Activated T-helper 2 cell treated with anti-CD3 and anti-CD28 coated beads, Interferon-gamma antibody, Interleukin-2, Interleukin-4, amounts not matched to agents 10 μg/mL and 5 μg/mL and 100 μg/mL, durations not matched to agents 14 hours and 24 hours and 36 hours (primary cell): ENCODE measurements at regions of chr1 and their contacts with region 1.

Region 1: DNA sequence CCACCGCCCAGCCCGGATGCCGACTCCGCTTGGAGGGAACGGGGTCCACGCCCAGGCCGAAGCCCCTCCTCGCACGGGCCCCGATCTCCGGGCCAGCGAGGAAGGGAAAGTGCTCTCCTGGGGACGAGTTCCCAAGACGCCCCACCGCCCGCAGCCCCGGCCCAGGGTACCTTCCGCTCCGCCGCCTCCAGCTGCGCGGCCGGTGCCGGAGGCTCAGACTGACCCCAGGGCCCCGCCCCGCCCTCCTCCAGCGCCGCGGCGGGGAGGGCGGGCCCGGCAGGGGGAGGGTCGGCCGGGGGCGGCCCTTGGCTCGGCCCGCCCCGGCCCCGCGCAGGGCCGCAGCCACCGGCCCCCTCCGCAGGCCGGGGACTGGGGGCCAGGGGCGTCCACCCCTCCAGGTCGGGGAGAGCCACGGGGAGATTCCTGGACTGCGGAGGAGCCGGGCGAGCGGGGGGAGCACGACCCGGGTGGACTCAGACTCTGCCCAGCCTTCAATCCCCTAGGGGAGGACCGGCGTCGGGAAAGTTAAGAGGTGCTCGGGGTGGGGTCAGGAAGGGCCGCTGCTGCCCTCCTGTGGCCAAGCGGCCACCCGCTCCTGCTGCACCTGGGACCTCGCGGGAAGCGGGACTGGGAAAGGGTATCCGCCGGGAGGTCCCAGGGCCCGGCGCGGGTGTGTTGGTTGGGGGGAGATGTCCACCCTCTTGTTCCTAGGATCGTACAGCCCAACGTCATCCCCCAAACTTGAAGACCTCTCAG is at the start of gene RHOC:
- DNase-seq: peak; percentile 57
- H3K4me3 Mint-ChIP-seq: peak within 1 kb of the TSS; percentile 81
- H3K27ac Mint-ChIP-seq: peak within 1 kb of the TSS; percentile 51
- H3K4me1 Mint-ChIP-seq: peaks cover 41% of the 10 kb centered on the region
- H3K27me3 Mint-ChIP-seq: peaks cover 18% of the 10 kb centered on the region
- total RNA-seq, gene RHOC: 68.7 and 74.7 TPM in 2 replicates

Region 2: GRCh38 chr1:111497592-111497991 is 1209.5 kb before region 1 on chr1:
- intact Hi-C with region 1: no loop called
- DNase-seq: no peak
- H3K4me3 Mint-ChIP-seq: no peak overlapping the region
- H3K27ac Mint-ChIP-seq: no peak overlapping the region
- H3K4me1 Mint-ChIP-seq: peaks cover 32% of the 10 kb centered on the region
- H3K27me3 Mint-ChIP-seq: no peaks in the 10 kb centered on the region

Region 3: GRCh38 chr1:112390775-112391602 is 316.1 kb before region 1 on chr1:
- intact Hi-C with region 1: loop called (anchors 1 kb)
- DNase-seq: peak; percentile 73
- H3K4me3 Mint-ChIP-seq: peak overlapping the region; percentile 75
- H3K27ac Mint-ChIP-seq: no peak overlapping the region
- H3K4me1 Mint-ChIP-seq: peaks cover 39% of the 10 kb centered on the region
- H3K27me3 Mint-ChIP-seq: peaks cover 5% of the 10 kb centered on the region

Region 4: GRCh38 chr1:112501810-112502641 is 205.1 kb before region 1 on chr1:
- intact Hi-C with region 1: loop called (anchors 2 kb)
- DNase-seq: peak; percentile 22
- H3K4me3 Mint-ChIP-seq: peak overlapping the region; percentile 24
- H3K27ac Mint-ChIP-seq: no peak overlapping the region
- H3K4me1 Mint-ChIP-seq: peaks cover 7% of the 10 kb centered on the region
- H3K27me3 Mint-ChIP-seq: peaks cover 69% of the 10 kb centered on the region

Region 5: GRCh38 chr1:112619520-112620376 is 87.3 kb before region 1 on chr1 and contains the start of gene CAPZA1:
- intact Hi-C with region 1: loop called (anchors 1 kb)
- DNase-seq: peak; percentile 90
- H3K4me3 Mint-ChIP-seq: peak within 1 kb of the TSS; percentile 99
- H3K27ac Mint-ChIP-seq: peak within 1 kb of the TSS; percentile 99
- H3K4me1 Mint-ChIP-seq: peaks cover 25% of the 10 kb centered on the region
- H3K27me3 Mint-ChIP-seq: no peaks in the 10 kb centered on the region
- total RNA-seq, gene CAPZA1: 260 and 269 TPM in 2 replicates

Region 6: GRCh38 chr1:112674439-112674985 is 32.6 kb before region 1 on chr1 and contains the start of gene MOV10:
- intact Hi-C with region 1: loop called (anchors 1 kb)
- DNase-seq: peak; percentile 60
- H3K4me3 Mint-ChIP-seq: peak within 1 kb of the TSS; percentile 99
- H3K27ac Mint-ChIP-seq: peak within 1 kb of the TSS; percentile 99
- H3K4me1 Mint-ChIP-seq: peaks cover 43% of the 10 kb centered on the region
- H3K27me3 Mint-ChIP-seq: no peaks in the 10 kb centered on the region
- total RNA-seq, gene MOV10: 64.5 and 68.1 TPM in 2 replicates